Endothelial cell of umbilical vein (primary cell): ENCODE measurements at regions of chr20 and their contacts with region 1.

Region 1: GRCh38 chr20:9616833-9617489 is 102.6 kb downstream of the LAMP5 start:
- DNase-seq: peak; percentile 62
- H3K4me3 ChIP-seq: no peak overlapping the region
- H3K27ac ChIP-seq: no peak overlapping the region
- H3K4me1 ChIP-seq: no peaks in the 10 kb centered on the region
- H3K27me3 ChIP-seq: peaks cover 7 to 8% of the 10 kb centered on the region in 2 experiments
- CTCF ChIP-seq: peak; percentile 69 to 70
- POLR2A ChIP-seq: no peak

Region 2: GRCh38 chr20:9903048-9903655 is 286.2 kb after region 1 on chr20:
- CTCF ChIA-PET with region 1: interaction called, 111 read pairs
- POLR2A ChIA-PET with region 1: no interaction called
- dilution Hi-C with region 1: no loop called
- intact Hi-C with region 1: no loop called
- DNase-seq: peak; percentile 11
- H3K4me3 ChIP-seq: no peak overlapping the region
- H3K27ac ChIP-seq: no peak overlapping the region
- H3K4me1 ChIP-seq: no peaks in the 10 kb centered on the region
- H3K27me3 ChIP-seq: peaks cover 0 to 1% of the 10 kb centered on the region in 2 experiments
- CTCF ChIP-seq: peak; percentile 51 to 53
- POLR2A ChIP-seq: no peak

Region 3: DNA sequence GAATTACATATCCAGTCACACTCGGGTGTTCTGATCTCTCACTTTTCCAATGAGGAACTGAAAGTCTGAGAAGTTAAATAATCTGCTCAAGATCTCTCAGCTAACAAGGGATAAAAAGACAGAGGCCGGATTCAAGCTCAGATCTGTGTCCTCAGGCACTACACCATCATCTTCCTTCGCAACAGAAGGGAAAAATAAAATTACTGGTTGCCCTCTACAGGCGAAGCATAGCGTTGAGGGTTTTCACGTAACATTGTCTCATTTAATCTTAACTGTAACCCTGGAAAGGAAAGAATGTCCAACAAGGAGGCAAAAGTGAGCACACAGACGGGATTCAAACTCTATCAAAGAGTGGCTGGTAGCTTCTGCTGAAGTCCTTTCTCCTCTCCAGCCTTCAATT is 350.0 kb after region 1 on chr20:
- CTCF ChIA-PET with region 1: interaction called, 36 read pairs
- POLR2A ChIA-PET with region 1: no interaction called
- dilution Hi-C with region 1: no loop called
- intact Hi-C with region 1: loop called (anchors 2 kb)
- DNase-seq: no peak
- H3K4me3 ChIP-seq: no peak overlapping the region
- H3K27ac ChIP-seq: no peak overlapping the region
- H3K4me1 ChIP-seq: no peaks in the 10 kb centered on the region
- H3K27me3 ChIP-seq: peaks cover 11 to 13% of the 10 kb centered on the region in 2 experiments
- CTCF ChIP-seq: peak; percentile 14 to 19
- POLR2A ChIP-seq: no peak

Region 4: GRCh38 chr20:10219452-10219791 is 602.5 kb after region 1 on chr20:
- CTCF ChIA-PET with region 1: interaction called, 3 read pairs
- POLR2A ChIA-PET with region 1: no interaction called
- dilution Hi-C with region 1: no loop called
- intact Hi-C with region 1: loop called (anchors 2 kb)
- DNase-seq: peak; percentile 78
- H3K4me3 ChIP-seq: peak overlapping the region in 2 of 3 experiments; percentile 26 to 75
- H3K27ac ChIP-seq: no peak overlapping the region
- H3K4me1 ChIP-seq: peaks cover 4% of the 10 kb centered on the region
- H3K27me3 ChIP-seq: peaks cover 24 to 36% of the 10 kb centered on the region in 2 experiments
- CTCF ChIP-seq: peak in 1 of 2 donors; percentile 3
- POLR2A ChIP-seq: no peak

Region 5: GRCh38 chr20:10427060-10427692 is 810.2 kb after region 1 on chr20:
- CTCF ChIA-PET with region 1: interaction called, 6 read pairs
- POLR2A ChIA-PET with region 1: no interaction called
- dilution Hi-C with region 1: no loop called
- intact Hi-C with region 1: loop called (anchors 1 kb)
- DNase-seq: peak; percentile 79
- H3K4me3 ChIP-seq: no peak overlapping the region
- H3K27ac ChIP-seq: no peak overlapping the region
- H3K4me1 ChIP-seq: peaks cover 8% of the 10 kb centered on the region
- H3K27me3 ChIP-seq: no peaks in the 10 kb centered on the region
- CTCF ChIP-seq: peak; percentile 66 to 79
- POLR2A ChIP-seq: no peak